AG04449 (cell line): ENCODE measurements at regions of chr10 and their contacts with region 1.

Region 1: GRCh38 chr10:72834183-72834825 is 59.2 kb upstream of the OIT3 start:
- DNase-seq: peak; percentile 24
- H3K4me3 ChIP-seq: no peak overlapping the region
- CTCF ChIP-seq: peak; percentile 41

Region 2: GRCh38 chr10:72375585-72375984 is 458.7 kb before region 1 on chr10:
- CTCF ChIA-PET with region 1: interaction called, 16 read pairs
- POLR2A ChIA-PET with region 1: no interaction called
- DNase-seq: no peak
- H3K4me3 ChIP-seq: no peak overlapping the region
- CTCF ChIP-seq: peak; percentile 18

Region 3: DNA sequence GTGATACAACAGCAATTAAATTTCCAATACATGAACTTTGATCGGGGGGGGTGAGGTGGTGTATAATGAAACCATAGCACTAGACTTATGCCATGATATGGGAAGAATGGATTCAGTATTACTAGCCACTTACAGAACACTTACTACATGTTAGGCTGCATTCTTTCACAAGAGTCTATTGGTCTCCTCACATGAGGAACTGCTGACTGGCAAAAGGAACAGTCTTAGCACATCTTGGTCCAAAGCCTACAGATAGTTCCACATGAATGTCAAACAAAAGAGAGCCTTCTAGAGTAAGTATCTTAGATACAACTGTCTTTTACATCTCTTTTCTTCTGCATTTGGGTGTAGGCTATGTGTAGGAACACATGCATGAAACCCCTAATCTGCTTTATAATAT is 363.6 kb before region 1 on chr10:
- CTCF ChIA-PET with region 1: no interaction called
- POLR2A ChIA-PET with region 1: no interaction called
- DNase-seq: no peak
- H3K4me3 ChIP-seq: no peak overlapping the region
- CTCF ChIP-seq: no peak

Region 4: DNA sequence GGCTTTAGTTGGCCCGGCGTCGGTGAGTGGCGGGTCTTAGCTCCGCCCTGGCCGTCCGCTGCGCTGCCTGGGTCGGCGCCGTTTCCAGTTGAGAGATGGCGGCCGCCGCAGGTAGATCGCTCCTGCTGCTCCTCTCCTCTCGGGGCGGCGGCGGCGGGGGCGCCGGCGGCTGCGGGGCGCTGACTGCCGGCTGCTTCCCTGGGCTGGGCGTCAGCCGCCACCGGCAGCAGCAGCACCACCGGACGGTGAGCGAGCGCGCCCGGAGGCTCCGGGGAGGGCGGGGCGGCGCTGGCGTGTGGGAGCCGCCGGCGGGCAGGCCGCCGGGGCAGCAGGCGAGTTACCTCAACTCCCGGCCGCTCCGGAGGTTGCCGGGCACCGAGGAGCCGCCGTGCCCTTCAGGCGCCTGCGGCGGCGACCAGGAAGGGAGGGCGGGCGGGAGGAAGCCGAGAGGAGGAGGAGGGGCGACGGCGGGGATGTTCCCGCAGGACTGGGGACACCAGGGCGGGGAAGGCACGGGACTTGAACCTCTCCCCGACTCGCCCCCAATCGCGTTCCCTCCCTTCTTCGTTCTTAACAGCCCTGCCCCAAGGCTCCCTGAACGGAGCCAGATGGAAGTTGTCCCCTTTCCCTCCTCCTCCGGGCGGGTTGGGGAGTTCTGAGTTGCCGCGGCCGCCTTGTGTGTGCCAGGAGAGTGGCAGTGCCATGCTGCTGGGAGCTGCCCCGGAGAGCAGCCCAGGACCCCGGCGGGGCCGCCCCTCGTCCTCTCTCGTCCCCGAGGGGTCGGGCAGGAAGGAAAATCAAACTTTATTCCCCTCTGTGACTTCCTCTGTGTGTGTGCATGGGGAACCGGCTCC is 142.0 kb before region 1 on chr10 and contains the start of gene MCU:
- CTCF ChIA-PET with region 1: interaction called, 98 read pairs
- POLR2A ChIA-PET with region 1: interaction called, 3 read pairs
- DNase-seq: no peak
- H3K4me3 ChIP-seq: peak within 1 kb of the TSS; percentile 85
- CTCF ChIP-seq: no peak

Region 5: DNA sequence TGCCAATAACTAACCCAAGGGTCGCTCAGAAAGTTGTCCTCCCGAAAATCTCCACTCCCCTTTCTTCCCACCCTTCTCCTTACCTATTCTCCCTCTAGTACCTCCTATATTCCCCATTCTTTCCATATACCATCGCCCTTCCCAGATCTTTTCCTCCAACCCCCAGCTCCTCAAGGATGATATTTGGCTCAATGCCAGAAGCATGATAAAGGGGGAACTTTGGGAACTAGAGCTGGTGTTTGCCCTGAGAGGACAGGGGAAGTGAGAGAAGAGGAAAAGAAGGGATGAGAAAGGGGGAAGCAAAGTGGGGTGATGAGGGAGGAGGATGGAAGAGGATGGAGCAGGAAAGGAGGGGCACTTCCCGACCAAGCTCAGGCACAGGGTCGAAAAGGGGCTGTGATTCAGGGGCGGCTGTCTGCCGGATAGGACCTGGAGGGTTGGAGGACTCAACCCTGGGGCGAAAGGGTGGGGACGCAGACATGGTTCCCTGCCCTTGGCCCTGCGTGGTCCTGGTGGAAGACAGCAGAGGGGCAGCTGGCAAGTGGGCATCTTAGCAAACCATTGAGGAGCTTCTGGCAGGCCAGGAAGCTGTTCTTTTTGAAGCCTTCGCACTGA is 61.0 kb after region 1 on chr10:
- CTCF ChIA-PET with region 1: no interaction called
- POLR2A ChIA-PET with region 1: no interaction called
- DNase-seq: no peak
- H3K4me3 ChIP-seq: no peak overlapping the region
- CTCF ChIP-seq: no peak